ENCODE measurements at regions of chr9 and their contacts with region 1.

Region 1: DNA sequence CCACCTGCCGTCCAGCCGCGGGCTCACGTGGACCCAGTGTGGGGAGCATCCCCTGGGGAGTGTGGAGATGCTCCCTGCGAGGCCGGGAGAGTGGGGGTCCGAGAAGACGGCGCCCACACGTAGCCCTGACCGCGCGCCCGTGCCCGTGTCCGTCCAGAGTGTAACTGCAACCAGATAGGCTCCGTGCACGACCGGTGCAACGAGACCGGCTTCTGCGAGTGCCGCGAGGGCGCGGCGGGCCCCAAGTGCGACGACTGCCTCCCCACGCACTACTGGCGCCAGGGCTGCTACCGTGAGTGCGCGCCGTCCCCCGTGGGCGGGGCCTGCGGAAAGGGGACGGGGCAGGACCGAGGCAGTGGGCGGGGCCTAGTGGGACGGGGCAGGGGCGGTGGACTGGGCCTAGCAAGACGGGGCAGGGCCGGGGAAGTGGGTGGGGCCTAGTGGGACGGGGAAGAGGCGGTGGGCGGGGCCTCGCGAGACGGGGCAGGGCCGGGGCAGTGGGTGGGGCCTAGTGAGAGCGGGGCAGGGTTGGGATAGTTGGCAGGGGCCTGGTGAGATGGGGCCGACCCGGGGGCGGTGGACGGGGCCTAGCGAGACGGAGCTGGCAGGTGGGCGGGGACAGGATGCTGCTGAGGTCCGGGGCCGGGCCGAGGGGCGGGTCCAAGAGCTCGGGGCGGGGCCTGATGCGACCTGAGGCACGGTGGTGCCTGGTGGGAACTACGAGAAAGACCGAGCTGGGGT is 79.1 kb downstream of the NTNG2 start:
- DNase-seq: peak; percentile 100
- ATAC-seq: peak; percentile 95
- H3K4me3 Mint-ChIP-seq: peak overlapping the region; percentile 87
- H3K27ac Mint-ChIP-seq: peak overlapping the region; percentile 91
- H3K4me1 Mint-ChIP-seq: peaks cover 10% of the 10 kb centered on the region
- H3K27me3 Mint-ChIP-seq: peaks cover 2% of the 10 kb centered on the region

Region 2: DNA sequence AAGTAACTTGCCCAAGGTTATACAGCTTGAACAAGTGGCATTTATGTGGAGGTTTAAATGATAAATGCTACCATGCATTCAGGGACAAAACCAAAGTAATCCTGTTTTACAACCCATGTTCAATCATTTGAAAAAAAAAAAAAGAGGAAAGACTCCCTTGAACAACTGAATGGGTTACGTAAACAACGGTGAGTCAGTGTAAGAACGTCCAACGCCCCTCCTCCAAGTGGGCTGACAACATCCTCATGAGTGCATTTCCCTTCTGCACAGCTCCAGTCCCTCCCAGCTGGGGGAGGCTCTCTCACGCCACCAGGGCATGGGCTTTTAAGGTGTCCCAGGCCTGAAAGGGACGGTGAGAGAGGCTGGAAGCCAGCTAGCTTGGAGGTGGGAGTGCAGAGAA is 605.6 kb before region 1 on chr9:
- CTCF ChIA-PET with region 1: no interaction called
- POLR2A ChIA-PET with region 1: no interaction called
- intact Hi-C with region 1: loop called in 1 of 2 experiments (anchors 10 kb)
- DNase-seq: peak; percentile 87
- ATAC-seq: peak; percentile 99
- H3K4me3 Mint-ChIP-seq: no peak overlapping the region
- H3K27ac Mint-ChIP-seq: peak overlapping the region; percentile 89
- H3K4me1 Mint-ChIP-seq: peaks cover 35% of the 10 kb centered on the region
- H3K27me3 Mint-ChIP-seq: no peaks in the 10 kb centered on the region

Region 3: GRCh38 chr9:131762356-131762932 is 478.5 kb before region 1 on chr9:
- CTCF ChIA-PET with region 1: interaction called, 19 read pairs
- POLR2A ChIA-PET with region 1: interaction called, 3 read pairs
- intact Hi-C with region 1: loop called (anchors 1 kb)
- DNase-seq: peak; percentile 89
- ATAC-seq: peak; percentile 90
- H3K4me3 Mint-ChIP-seq: no peak overlapping the region
- H3K27ac Mint-ChIP-seq: no peak overlapping the region
- H3K4me1 Mint-ChIP-seq: peaks cover 14% of the 10 kb centered on the region
- H3K27me3 Mint-ChIP-seq: peaks cover 5% of the 10 kb centered on the region

Region 4: GRCh38 chr9:132079391-132080091 is 161.4 kb before region 1 on chr9 and contains the start of gene MED27:
- CTCF ChIA-PET with region 1: interaction called, 5 read pairs
- POLR2A ChIA-PET with region 1: no interaction called
- intact Hi-C with region 1: loop called (anchors 1 kb)
- DNase-seq: peak; percentile 97
- ATAC-seq: peak; percentile 94
- H3K4me3 Mint-ChIP-seq: peak within 1 kb of the TSS; percentile 96
- H3K27ac Mint-ChIP-seq: peak within 1 kb of the TSS; percentile 86
- H3K4me1 Mint-ChIP-seq: peaks cover 41% of the 10 kb centered on the region
- H3K27me3 Mint-ChIP-seq: no peaks in the 10 kb centered on the region
- total RNA-seq, gene MED27: 29.1 to 32.5 TPM

Region 5: GRCh38 chr9:132169672-132170392 is 71.1 kb before region 1 on chr9:
- CTCF ChIA-PET with region 1: interaction called, 76 read pairs
- POLR2A ChIA-PET with region 1: no interaction called
- intact Hi-C with region 1: loop called (anchors 1 to 2 kb)
- DNase-seq: peak; percentile 79
- ATAC-seq: peak; percentile 58
- H3K4me3 Mint-ChIP-seq: no peak overlapping the region
- H3K27ac Mint-ChIP-seq: no peak overlapping the region
- H3K4me1 Mint-ChIP-seq: no peaks in the 10 kb centered on the region
- H3K27me3 Mint-ChIP-seq: peaks cover 33% of the 10 kb centered on the region

Region 6: DNA sequence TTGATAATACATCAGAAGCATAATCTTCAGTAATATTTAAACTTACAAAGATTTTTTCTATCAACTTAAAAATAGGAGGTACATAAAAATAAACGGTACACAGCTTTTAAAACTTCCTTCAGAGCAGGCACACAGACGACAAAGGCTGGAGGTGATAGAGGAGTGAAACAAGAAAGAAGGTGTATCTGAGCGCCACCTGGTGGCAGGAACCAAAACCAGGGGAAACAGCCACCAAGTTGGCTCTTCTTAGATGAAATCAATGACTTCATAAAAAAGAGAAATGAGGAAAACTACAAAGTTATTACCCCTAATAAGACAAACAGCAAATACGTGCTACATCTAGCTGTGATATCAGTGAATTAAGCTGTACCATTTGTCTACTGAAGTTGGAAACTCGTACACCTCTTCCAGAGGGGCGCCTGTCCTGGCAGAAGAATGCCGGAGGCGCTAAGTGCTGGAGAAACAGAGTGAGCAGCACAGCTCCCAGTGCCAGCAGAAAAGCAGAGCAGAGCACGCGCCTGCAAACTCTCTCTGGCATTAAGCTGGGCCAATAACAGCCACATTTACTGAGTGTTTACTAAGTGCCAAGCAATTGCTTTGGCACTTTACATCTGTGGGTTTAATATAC is 27.9 kb after region 1 on chr9:
- CTCF ChIA-PET with region 1: interaction called, 4 read pairs
- POLR2A ChIA-PET with region 1: no interaction called
- intact Hi-C with region 1: loop called in 1 of 2 experiments (anchors 2 kb)
- DNase-seq: peak; percentile 87
- ATAC-seq: peak; percentile 80
- H3K4me3 Mint-ChIP-seq: no peak overlapping the region
- H3K27ac Mint-ChIP-seq: peak overlapping the region; percentile 67
- H3K4me1 Mint-ChIP-seq: peaks cover 17% of the 10 kb centered on the region
- H3K27me3 Mint-ChIP-seq: no peaks in the 10 kb centered on the region

Measured in activated CD4-positive, alpha-beta T cell treated with anti-CD3 and anti-CD28 coated beads for 36 hours (primary cell).